H1 (cell line): ENCODE measurements at regions of chr10 and their contacts with region 1.

Region 1: GRCh38 chr10:4656576-4657182 is 169.3 kb upstream of the AKR1E2 start:
- DNase-seq: no peak
- H3K4me3 ChIP-seq: no peak overlapping the region
- H3K27ac ChIP-seq: no peak overlapping the region
- H3K4me1 ChIP-seq: peaks cover 0 to 2% (median 0%) of the 10 kb centered on the region in 4 experiments; a peak in 1 of 7 replicates
- H3K27me3 ChIP-seq: no peaks in the 10 kb centered on the region; a peak in 2 of 7 replicates
- CTCF ChIP-seq: peak; percentile 54 to 81 (median 70)
- EP300 ChIP-seq: no peak
- POLR2A ChIP-seq: no peak
- RAD21 ChIP-seq: peak; percentile 88 to 91

Region 2: GRCh38 chr10:4391683-4392082 is 265.0 kb before region 1 on chr10:
- CTCF ChIA-PET with region 1: interaction called, 16 read pairs
- POLR2A ChIA-PET with region 1: no interaction called
- DNase-seq: peak; percentile 19 to 59
- H3K4me3 ChIP-seq: no peak overlapping the region
- H3K27ac ChIP-seq: no peak overlapping the region
- H3K4me1 ChIP-seq: peaks cover 0 to 2% (median under 1%) of the 10 kb centered on the region in 4 experiments; a peak in 2 of 7 replicates
- H3K27me3 ChIP-seq: no peaks in the 10 kb centered on the region
- CTCF ChIP-seq: peak; percentile 53 to 61 (median 59)
- EP300 ChIP-seq: no peak
- POLR2A ChIP-seq: no peak
- RAD21 ChIP-seq: peak; percentile 83 to 84

Region 3: GRCh38 chr10:4902571-4903011 is 245.9 kb after region 1 on chr10:
- CTCF ChIA-PET with region 1: no interaction called
- POLR2A ChIA-PET with region 1: no interaction called
- DNase-seq: no peak
- H3K4me3 ChIP-seq: no peak overlapping the region
- H3K27ac ChIP-seq: no peak overlapping the region
- H3K4me1 ChIP-seq: no peaks in the 10 kb centered on the region
- H3K27me3 ChIP-seq: no peaks in the 10 kb centered on the region
- CTCF ChIP-seq: no peak
- EP300 ChIP-seq: no peak
- POLR2A ChIP-seq: no peak
- RAD21 ChIP-seq: no peak